CD4-positive, alpha-beta T cell (primary cell): ENCODE measurements at regions of chr5 and their contacts with region 1.

Region 1: GRCh38 chr5:139523635-139524445 is 37.3 kb upstream of the UBE2D2 start:
- DNase-seq: no peak
- ATAC-seq: no peak
- H3K4me3 ChIP-seq: no peak overlapping the region
- H3K4me3 Mint-ChIP-seq: no peak overlapping the region
- H3K27ac ChIP-seq: no peak overlapping the region
- H3K27ac Mint-ChIP-seq: no peak overlapping the region
- H3K4me1 ChIP-seq: no peaks in the 10 kb centered on the region
- H3K4me1 Mint-ChIP-seq: peaks cover 2% of the 10 kb centered on the region
- H3K27me3 ChIP-seq: no peaks in the 10 kb centered on the region
- H3K27me3 Mint-ChIP-seq: no peaks in the 10 kb centered on the region
- CTCF ChIP-seq: no peak

Region 2: GRCh38 chr5:139551191-139551889 is 27.5 kb after region 1 on chr5:
- CTCF ChIA-PET with region 1: no interaction called
- POLR2A ChIA-PET with region 1: no interaction called
- intact Hi-C with region 1: loop called in 1 of 2 experiments (anchors 2 kb)
- DNase-seq: no peak
- ATAC-seq: no peak
- H3K4me3 ChIP-seq: no peak overlapping the region
- H3K4me3 Mint-ChIP-seq: no peak overlapping the region
- H3K27ac ChIP-seq: no peak overlapping the region
- H3K27ac Mint-ChIP-seq: no peak overlapping the region
- H3K4me1 ChIP-seq: no peaks in the 10 kb centered on the region
- H3K4me1 Mint-ChIP-seq: peaks cover 6% of the 10 kb centered on the region
- H3K27me3 ChIP-seq: no peaks in the 10 kb centered on the region
- H3K27me3 Mint-ChIP-seq: no peaks in the 10 kb centered on the region
- CTCF ChIP-seq: no peak